Activated T-helper 2 cell treated with anti-CD3 and anti-CD28 coated beads, Interferon-gamma antibody, Interleukin-2, Interleukin-4, amounts not matched to agents 10 μg/mL and 5 μg/mL and 100 μg/mL, durations not matched to agents 14 hours and 24 hours and 36 hours (primary cell): ENCODE measurements at regions of chr13 and their contacts with region 1.

Region 1: GRCh38 chr13:112942689-112943308 is 26.2 kb upstream of the MCF2L start:
- DNase-seq: peak; percentile 86
- H3K4me3 Mint-ChIP-seq: peak overlapping the region; percentile 86
- H3K27ac Mint-ChIP-seq: no peak overlapping the region
- H3K4me1 Mint-ChIP-seq: peaks cover 5% of the 10 kb centered on the region
- H3K27me3 Mint-ChIP-seq: peaks cover 35% of the 10 kb centered on the region

Region 2: GRCh38 chr13:113029487-113030258 is 86.9 kb after region 1 on chr13:
- intact Hi-C with region 1: loop called (anchors 1 kb)
- DNase-seq: peak; percentile 21
- H3K4me3 Mint-ChIP-seq: no peak overlapping the region
- H3K27ac Mint-ChIP-seq: no peak overlapping the region
- H3K4me1 Mint-ChIP-seq: no peaks in the 10 kb centered on the region
- H3K27me3 Mint-ChIP-seq: no peaks in the 10 kb centered on the region

Region 3: DNA sequence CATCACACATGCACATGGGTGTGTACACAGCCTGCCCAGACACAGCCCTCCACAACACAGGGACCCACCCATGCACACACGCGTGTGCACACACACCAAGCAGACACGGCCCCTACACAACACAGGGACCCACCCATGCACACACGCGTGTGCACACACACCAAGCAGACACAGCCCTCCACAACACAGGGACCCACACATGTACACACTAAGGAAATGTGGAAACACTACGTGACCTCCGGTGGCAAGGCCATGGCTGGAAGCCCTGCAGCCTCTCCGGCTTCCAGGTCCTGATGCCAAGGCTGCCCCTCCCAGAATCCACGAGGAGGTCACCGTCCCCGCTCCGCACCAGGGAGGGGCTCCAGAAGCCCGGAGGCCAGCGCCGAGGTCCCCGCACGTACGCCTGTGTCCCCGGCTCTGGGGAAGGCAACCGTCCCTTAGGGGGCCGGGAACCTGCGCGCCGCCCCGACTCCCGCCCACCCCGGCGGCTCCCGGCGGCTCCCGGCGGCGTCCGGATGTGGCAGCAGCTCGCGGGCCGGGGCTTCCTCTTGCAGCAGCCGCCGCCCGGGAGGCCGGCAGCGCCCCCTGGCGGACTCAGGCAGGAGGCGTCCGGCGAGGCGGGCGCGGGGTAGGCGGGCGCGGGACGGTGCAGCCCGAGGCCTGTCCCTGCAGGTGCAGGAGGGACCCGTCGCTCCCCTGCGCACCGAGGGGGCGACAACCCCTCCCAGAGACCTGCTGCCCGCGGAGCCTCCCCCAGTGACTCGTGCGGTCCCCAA is 451.0 kb after region 1 on chr13:
- intact Hi-C with region 1: loop called (anchors 1 kb)
- DNase-seq: peak; percentile 77
- H3K4me3 Mint-ChIP-seq: peak overlapping the region; percentile 84
- H3K27ac Mint-ChIP-seq: peak overlapping the region; percentile 67
- H3K4me1 Mint-ChIP-seq: peaks cover 4% of the 10 kb centered on the region
- H3K27me3 Mint-ChIP-seq: no peaks in the 10 kb centered on the region